ENCODE measurements at regions of chr17 and their contacts with region 1.

Region 1: GRCh38 chr17:81440876-81441244 is 45.6 kb downstream of the BAHCC1 start:
- H3K4me3 ChIP-seq: no peak overlapping the region
- H3K27ac ChIP-seq: no peak overlapping the region
- H3K4me1 ChIP-seq: no peaks in the 10 kb centered on the region
- CTCF ChIP-seq: peak; percentile 75

Region 2: GRCh38 chr17:81401723-81402529 is 38.9 kb before region 1 on chr17:
- CTCF ChIA-PET with region 1: interaction called, 10 read pairs
- POLR2A ChIA-PET with region 1: interaction called, 4 read pairs
- H3K4me3 ChIP-seq: no peak overlapping the region
- H3K27ac ChIP-seq: no peak overlapping the region; the same call in 1 of the 2 replicates
- H3K4me1 ChIP-seq: peaks cover 33% of the 10 kb centered on the region
- CTCF ChIP-seq: no peak

Region 3: DNA sequence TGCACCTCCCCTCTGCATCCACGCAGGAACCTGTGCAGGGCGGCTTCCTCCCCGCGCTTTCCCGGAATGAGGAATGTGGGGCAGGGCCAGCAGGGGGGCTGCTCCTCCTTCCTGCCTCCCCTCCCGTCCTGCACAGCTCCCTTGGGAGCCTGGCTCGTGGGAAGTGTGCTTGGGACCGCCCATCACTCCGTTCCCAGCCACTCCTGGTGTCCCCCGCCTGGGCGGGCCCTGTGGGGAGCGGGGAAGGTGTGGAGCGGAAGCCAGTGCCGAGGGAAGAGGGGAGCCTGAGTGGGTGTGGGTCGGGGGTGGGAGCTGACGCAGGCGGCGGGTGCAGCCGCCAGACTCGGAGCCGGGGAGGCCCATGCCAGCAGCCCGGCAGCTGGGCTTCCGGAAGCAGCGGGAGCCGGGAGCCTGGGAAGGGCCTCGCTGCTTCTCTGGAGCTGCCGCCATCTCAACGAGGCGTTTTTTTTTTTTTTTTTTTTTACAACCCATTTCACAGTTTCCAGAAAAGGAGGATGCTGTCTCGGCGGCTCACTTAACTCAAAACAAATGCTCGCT is 21.5 kb before region 1 on chr17:
- CTCF ChIA-PET with region 1: interaction called, 16 read pairs
- POLR2A ChIA-PET with region 1: interaction called, 3 read pairs
- H3K4me3 ChIP-seq: peak overlapping the region; percentile 25
- H3K27ac ChIP-seq: peak overlapping the region; percentile 81
- H3K4me1 ChIP-seq: peaks cover 16% of the 10 kb centered on the region
- CTCF ChIP-seq: no peak

Region 4: DNA sequence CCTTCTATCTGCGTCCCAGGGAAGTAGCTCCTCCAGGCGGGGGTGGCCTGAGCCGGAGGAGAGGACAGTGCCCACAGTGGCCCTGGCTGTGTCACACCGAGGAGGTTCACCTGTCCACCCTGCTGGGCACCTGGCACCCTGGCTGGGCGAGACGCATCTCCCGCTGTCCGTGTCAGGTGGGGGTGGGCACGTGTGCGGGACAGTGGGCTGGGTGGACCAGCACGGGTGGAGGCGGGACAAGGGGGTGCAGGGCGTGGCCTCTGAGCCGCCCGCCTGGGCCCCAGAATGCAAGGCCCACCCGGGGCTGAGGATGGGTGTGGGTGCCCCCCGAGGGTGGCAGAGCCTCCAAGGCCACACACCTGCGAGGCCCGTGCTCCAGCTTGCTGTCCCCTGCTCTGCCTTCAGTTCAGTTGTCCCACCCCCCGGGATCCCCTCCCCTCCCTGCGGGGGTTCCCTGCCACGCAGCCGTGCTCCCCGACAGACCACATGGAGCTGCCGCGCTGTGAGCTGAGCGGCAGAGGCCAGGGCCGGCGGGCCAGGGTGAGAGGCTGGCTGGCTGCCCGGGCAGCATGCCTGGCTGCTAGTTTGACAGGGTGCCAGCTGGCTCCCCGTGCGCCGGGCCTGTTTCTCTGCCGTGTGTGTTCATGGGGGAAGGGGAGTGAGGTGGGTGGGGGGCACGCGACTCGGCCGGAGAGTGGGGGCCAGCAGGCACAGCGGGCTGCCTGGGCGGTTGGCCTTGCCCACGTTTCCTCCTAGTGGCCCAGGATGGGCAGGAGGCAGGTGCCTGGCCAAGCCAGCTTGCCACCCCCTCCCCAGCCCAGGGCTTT is 11.7 kb before region 1 on chr17:
- CTCF ChIA-PET with region 1: interaction called, 21 read pairs
- POLR2A ChIA-PET with region 1: no interaction called
- H3K4me3 ChIP-seq: no peak overlapping the region
- H3K27ac ChIP-seq: no peak overlapping the region
- H3K4me1 ChIP-seq: peaks cover 2% of the 10 kb centered on the region; the same call in 1 of the 2 replicates
- CTCF ChIP-seq: no peak

Region 5: DNA sequence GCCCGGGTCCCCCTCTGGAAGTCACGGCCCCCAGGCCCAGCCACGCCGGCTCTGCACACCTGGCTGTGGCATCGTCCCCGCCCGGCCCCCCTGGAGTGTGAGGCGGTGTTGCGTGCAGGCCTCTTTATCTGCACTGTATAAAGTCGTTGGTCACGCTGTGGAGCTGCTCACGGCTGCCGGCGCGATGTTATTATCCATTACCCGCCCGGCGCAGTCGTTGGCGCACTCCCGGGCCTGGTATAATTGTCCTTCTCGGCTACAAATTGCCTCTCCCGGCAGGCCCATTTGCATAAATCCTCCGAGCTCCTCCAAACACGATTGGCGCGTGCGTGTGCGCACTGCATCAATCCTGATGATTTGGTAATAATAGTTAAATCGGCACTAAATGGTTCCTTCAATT is 12.2 kb after region 1 on chr17:
- CTCF ChIA-PET with region 1: interaction called, 14 read pairs
- POLR2A ChIA-PET with region 1: no interaction called
- H3K4me3 ChIP-seq: no peak overlapping the region
- H3K27ac ChIP-seq: no peak overlapping the region
- H3K4me1 ChIP-seq: no peaks in the 10 kb centered on the region
- CTCF ChIP-seq: no peak

Region 6: GRCh38 chr17:81460856-81461460 is 20.1 kb after region 1 on chr17:
- CTCF ChIA-PET with region 1: interaction called, 16 read pairs
- POLR2A ChIA-PET with region 1: no interaction called
- H3K4me3 ChIP-seq: no peak overlapping the region
- H3K27ac ChIP-seq: no peak overlapping the region
- H3K4me1 ChIP-seq: no peaks in the 10 kb centered on the region
- CTCF ChIP-seq: no peak

Region 7: GRCh38 chr17:81484195-81484979 is 43.5 kb after region 1 on chr17:
- CTCF ChIA-PET with region 1: interaction called, 21 read pairs
- POLR2A ChIA-PET with region 1: no interaction called
- H3K4me3 ChIP-seq: peak overlapping the region; percentile 45
- H3K27ac ChIP-seq: peak overlapping the region; percentile 24; the same call in 1 of the 2 replicates
- H3K4me1 ChIP-seq: peaks cover 8% of the 10 kb centered on the region
- CTCF ChIP-seq: peak; percentile 93

Measured in HEK293 (cell line).